ENCODE measurements at regions of chr6 and their contacts with region 1.

Region 1: DNA sequence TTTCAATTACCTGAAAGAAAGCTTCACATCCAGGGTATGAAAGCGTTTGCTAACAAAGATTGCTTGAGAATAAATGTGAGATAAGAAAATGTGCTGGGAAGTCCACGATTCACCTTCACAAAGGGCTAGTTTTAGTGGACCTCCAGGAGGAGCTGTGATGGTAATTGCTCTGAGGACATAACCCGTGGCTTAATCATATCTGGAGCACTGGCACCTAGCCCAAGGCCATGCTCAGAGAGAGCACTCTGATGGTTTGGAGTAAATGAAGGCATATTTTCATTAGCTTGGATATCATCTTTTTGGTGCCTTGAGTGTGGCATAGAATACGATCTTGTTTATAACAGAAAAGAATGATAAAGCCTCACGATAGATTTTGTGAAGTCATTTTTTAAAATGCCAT is 46.9 kb upstream of the BACH2 start:
- DNase-seq: peak in 1 of 5 donors; percentile 51
- ATAC-seq: no peak
- H3K4me3 ChIP-seq: no peak overlapping the region
- H3K27ac ChIP-seq: no peak overlapping the region
- H3K4me1 ChIP-seq: no peaks in the 10 kb centered on the region
- H3K27me3 ChIP-seq: peaks cover 0 to 4% (median 0%) of the 10 kb centered on the region in 9 donors
- CTCF ChIP-seq: no peak
- POLR2A ChIP-seq: no peak

Region 2: GRCh38 chr6:89655122-89655521 is 688.5 kb before region 1 on chr6:
- intact Hi-C with region 1: loop called in 1 of 10 experiments (anchors 10 kb)
- DNase-seq: no peak
- ATAC-seq: no peak
- H3K4me3 ChIP-seq: no peak overlapping the region
- H3K27ac ChIP-seq: no peak overlapping the region
- H3K4me1 ChIP-seq: no peaks in the 10 kb centered on the region
- H3K27me3 ChIP-seq: no peaks in the 10 kb centered on the region
- CTCF ChIP-seq: no peak
- POLR2A ChIP-seq: no peak

Measured in heart left ventricle (tissue), 16 donors.